Psoas muscle (tissue), 8 donors: ENCODE measurements at regions of chr1 and their contacts with region 1.

Region 1: GRCh38 chr1:67347688-67348472 is 40.2 kb downstream of the IL12RB2 start:
- DNase-seq: peak in 1 of 2 donors; percentile 27
- ATAC-seq: peak; percentile 82 to 97 (median 89)
- H3K4me3 ChIP-seq: no peak overlapping the region
- H3K27ac ChIP-seq: no peak overlapping the region
- H3K4me1 ChIP-seq: peaks cover 4% of the 10 kb centered on the region
- H3K27me3 ChIP-seq: no peaks in the 10 kb centered on the region
- CTCF ChIP-seq: peak; percentile 85

Region 2: DNA sequence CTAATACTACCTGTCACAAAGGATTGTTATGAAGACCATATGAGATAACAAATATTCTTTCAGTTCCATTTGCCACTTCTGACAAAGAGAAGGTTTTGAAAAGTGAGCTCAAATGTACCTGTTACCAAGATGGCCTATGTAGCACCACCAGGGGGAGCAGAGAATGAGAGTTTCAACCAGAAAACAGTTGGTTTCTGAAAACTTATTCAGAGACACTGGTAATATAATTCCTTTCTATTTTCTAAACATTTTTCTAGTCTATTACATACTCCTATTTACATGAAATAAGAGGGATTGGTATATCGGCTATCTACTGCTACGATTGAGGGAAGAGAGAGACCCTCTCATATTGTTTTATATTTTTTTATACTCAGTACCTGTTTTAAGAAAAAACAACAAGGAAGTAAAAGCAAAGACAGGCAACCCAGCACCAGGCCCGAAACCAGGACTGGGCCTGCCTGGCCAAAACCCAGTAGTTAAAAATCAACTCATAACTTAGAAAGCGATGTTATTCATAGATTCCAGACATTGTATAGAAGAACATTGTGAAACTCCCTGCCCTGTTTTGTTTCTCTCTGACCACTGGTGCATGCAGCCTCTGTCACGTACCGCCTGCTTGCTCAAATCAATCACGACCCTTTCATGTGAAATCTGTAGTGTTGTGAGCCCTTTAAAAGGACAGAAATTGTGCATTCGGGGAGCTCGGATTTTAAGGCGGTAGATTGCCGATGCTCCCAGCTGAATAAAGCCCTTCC is 133.3 kb before region 1 on chr1:
- intact Hi-C with region 1: no loop called
- DNase-seq: no peak
- ATAC-seq: no peak
- H3K4me3 ChIP-seq: no peak overlapping the region
- H3K27ac ChIP-seq: no peak overlapping the region
- H3K4me1 ChIP-seq: no peaks in the 10 kb centered on the region
- H3K27me3 ChIP-seq: peaks cover 0 to 2% (median 0%) of the 10 kb centered on the region in 3 donors
- CTCF ChIP-seq: peak; percentile 34

Region 3: GRCh38 chr1:67285780-67286488 is 61.9 kb before region 1 on chr1:
- intact Hi-C with region 1: no loop called
- DNase-seq: no peak
- ATAC-seq: no peak
- H3K4me3 ChIP-seq: no peak overlapping the region
- H3K27ac ChIP-seq: no peak overlapping the region
- H3K4me1 ChIP-seq: no peaks in the 10 kb centered on the region
- H3K27me3 ChIP-seq: no peaks in the 10 kb centered on the region
- CTCF ChIP-seq: no peak

Region 4: DNA sequence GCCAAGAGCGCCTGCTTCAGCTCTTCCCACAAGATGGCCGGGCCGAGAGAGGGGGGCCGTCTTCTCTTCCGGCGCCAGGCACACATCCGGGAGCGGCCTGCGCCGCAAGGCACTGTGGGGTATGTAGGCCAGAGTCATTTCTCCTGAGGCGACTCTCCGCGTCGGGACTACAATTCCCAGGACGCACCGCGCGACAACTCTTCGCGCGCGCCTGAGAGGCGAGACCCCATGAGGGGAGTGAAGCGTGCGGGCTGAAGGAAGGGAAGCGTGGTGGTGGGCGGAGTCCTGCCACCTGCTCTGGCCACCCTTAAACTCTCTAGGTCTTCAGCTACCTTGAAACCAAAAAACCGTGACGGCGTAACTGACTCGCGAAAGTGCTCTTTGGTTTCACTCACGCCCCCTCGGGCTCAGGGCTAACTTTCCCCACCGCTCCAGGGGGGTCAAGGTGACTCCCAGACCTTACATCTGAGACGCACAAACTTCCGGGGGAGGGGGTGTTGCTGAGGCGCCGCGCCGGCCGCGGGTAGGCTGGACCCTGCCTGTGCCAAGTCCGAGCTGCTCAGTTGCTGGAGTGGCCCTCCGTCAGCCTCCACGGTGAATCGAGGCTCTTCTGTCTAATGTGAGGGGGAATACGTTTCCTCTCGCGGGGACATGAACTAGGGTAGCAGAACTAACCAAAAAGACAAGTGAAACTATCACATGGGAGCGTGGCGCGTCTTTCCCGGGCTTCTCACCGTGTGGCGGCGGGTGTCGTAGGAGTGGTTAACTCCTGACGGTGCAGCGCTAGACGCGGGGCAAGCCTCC is 82.7 kb after region 1 on chr1 and contains the start of gene SERBP1:
- intact Hi-C with region 1: no loop called
- DNase-seq: peak; percentile 96 to 98
- ATAC-seq: peak; percentile 94 to 97 (median 94)
- H3K4me3 ChIP-seq: peak within 1 kb of the TSS; percentile 89
- H3K27ac ChIP-seq: peak within 1 kb of the TSS; percentile 91
- H3K4me1 ChIP-seq: peaks cover 51% of the 10 kb centered on the region
- H3K27me3 ChIP-seq: no peaks in the 10 kb centered on the region
- CTCF ChIP-seq: no peak
- total RNA-seq, gene SERBP1: 197 to 289 (median 216) TPM

Region 5: DNA sequence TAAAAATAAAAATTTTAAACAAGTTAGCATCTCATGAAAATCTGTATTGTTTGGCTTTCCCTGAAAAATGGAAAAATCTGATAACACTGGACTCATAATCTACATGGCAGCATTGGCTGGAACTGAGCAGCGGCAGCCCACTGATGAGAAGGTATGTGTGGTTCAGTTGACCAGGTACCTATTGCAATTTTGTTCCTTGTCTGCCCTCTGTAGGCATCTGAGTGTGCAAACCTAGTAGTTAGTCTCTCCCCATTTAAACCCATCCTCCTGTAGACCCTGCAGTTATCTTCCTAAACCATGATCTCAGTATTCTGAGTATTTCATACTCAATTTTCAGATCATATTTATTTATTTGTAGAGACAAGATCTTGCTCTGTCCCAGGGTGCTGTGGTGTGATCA is 141.8 kb after region 1 on chr1:
- intact Hi-C with region 1: loop called in 1 of 2 experiments (anchors 2 kb)
- DNase-seq: no peak
- ATAC-seq: peak; percentile 84 to 97 (median 92)
- H3K4me3 ChIP-seq: no peak overlapping the region
- H3K27ac ChIP-seq: no peak overlapping the region
- H3K4me1 ChIP-seq: no peaks in the 10 kb centered on the region
- H3K27me3 ChIP-seq: no peaks in the 10 kb centered on the region
- CTCF ChIP-seq: peak; percentile 58